ENCODE measurements at regions of chr12 and their contacts with region 1.

Region 1: GRCh38 chr12:90499795-90500194 is 455.2 kb downstream of the CCER1 start:
- DNase-seq: no peak
- ATAC-seq: no peak
- H3K4me3 ChIP-seq: no peak overlapping the region
- H3K4me3 Mint-ChIP-seq: no peak overlapping the region
- H3K27ac ChIP-seq: no peak overlapping the region
- H3K27ac Mint-ChIP-seq: no peak overlapping the region
- H3K4me1 ChIP-seq: no peaks in the 10 kb centered on the region
- H3K4me1 Mint-ChIP-seq: no peaks in the 10 kb centered on the region
- H3K27me3 ChIP-seq: no peaks in the 10 kb centered on the region
- H3K27me3 Mint-ChIP-seq: no peaks in the 10 kb centered on the region
- CTCF ChIP-seq: no peak

Region 2: DNA sequence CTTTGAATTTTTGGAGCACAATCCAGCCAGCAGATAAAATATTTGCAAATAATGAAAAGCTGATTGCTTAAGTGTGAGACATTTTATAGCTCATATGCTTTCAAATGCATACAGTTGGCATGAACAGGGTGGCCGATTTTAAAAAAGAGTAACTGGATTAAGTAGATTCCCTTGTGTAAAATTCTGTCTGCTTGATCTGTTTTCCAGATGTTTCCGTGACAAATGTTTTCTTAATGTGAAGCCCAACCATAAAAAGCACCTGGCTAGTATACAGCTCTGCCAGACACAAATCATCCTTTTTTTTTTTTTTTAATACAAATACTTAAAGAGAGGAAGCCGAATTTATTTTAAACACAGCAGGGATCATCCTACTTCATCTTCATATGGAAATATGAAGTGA is 14.5 kb after region 1 on chr12:
- CTCF ChIA-PET with region 1: no interaction called
- POLR2A ChIA-PET with region 1: no interaction called
- intact Hi-C with region 1: loop called in 1 of 2 experiments (anchors 2 kb)
- DNase-seq: no peak
- ATAC-seq: no peak
- H3K4me3 ChIP-seq: no peak overlapping the region
- H3K4me3 Mint-ChIP-seq: no peak overlapping the region
- H3K27ac ChIP-seq: no peak overlapping the region
- H3K27ac Mint-ChIP-seq: no peak overlapping the region
- H3K4me1 ChIP-seq: no peaks in the 10 kb centered on the region
- H3K4me1 Mint-ChIP-seq: peaks cover 5% of the 10 kb centered on the region
- H3K27me3 ChIP-seq: no peaks in the 10 kb centered on the region
- H3K27me3 Mint-ChIP-seq: no peaks in the 10 kb centered on the region
- CTCF ChIP-seq: no peak